IMR-90 (cell line): ENCODE measurements at regions of chr1 and their contacts with region 1.

Region 1: GRCh38 chr1:41135196-41135947 is 106.7 kb downstream of the SCMH1 start:
- DNase-seq: no peak
- ATAC-seq: no peak
- H3K4me3 ChIP-seq: no peak overlapping the region
- H3K27ac ChIP-seq: no peak overlapping the region
- H3K4me1 ChIP-seq: no peaks in the 10 kb centered on the region
- H3K27me3 ChIP-seq: no peaks in the 10 kb centered on the region
- CTCF ChIP-seq: no peak
- POLR2A ChIP-seq: no peak
- RAD21 ChIP-seq: no peak

Region 2: DNA sequence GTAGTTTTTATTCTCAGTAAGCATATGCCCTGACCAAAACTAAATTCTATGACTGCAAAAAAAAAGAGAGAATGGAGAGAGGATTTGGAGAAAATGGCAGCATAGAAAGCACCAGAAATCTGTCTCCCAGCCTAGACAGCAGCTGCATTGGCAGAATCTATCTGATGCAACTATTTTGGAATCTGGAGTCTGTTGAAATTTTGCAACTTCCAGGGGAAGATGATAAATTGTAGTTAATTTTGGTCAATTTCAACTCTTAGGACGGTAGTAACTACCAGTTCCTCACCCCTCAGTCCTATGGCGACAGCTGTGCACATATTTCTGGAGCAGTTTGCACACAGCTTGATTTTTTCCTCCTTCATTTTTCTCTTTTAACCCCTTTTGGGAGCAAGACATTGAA is 615.9 kb before region 1 on chr1:
- CTCF ChIA-PET with region 1: no interaction called
- POLR2A ChIA-PET with region 1: no interaction called
- dilution Hi-C with region 1: no loop called
- in situ Hi-C with region 1: no loop called
- intact Hi-C with region 1: no loop called
- DNase-seq: no peak
- ATAC-seq: no peak
- H3K4me3 ChIP-seq: no peak overlapping the region
- H3K27ac ChIP-seq: no peak overlapping the region
- H3K4me1 ChIP-seq: no peaks in the 10 kb centered on the region
- H3K27me3 ChIP-seq: no peaks in the 10 kb centered on the region
- CTCF ChIP-seq: no peak
- POLR2A ChIP-seq: no peak
- RAD21 ChIP-seq: no peak

Region 3: GRCh38 chr1:41222496-41222895 is 87.1 kb after region 1 on chr1:
- CTCF ChIA-PET with region 1: no interaction called
- POLR2A ChIA-PET with region 1: no interaction called
- dilution Hi-C with region 1: no loop called
- in situ Hi-C with region 1: no loop called
- intact Hi-C with region 1: loop called (anchors 1 kb)
- DNase-seq: no peak
- ATAC-seq: no peak
- H3K4me3 ChIP-seq: no peak overlapping the region
- H3K27ac ChIP-seq: no peak overlapping the region
- H3K4me1 ChIP-seq: 0 out of 2 replicates have a peak, but pooled peaks cover 2% of the 10 kb centered on the region
- H3K27me3 ChIP-seq: no peaks in the 10 kb centered on the region
- CTCF ChIP-seq: no peak
- POLR2A ChIP-seq: no peak
- RAD21 ChIP-seq: no peak